ENCODE measurements at regions of chr5 and their contacts with region 1.

Region 1: GRCh38 chr5:172910828-172911627 is 48.2 kb upstream of the RPL26L1 start:
- DNase-seq: peak; percentile 73
- ATAC-seq: peak; percentile 83
- H3K4me3 ChIP-seq: no peak overlapping the region
- H3K4me3 Mint-ChIP-seq: peak overlapping the region; percentile 38
- H3K27ac ChIP-seq: peak overlapping the region; percentile 59 to 91
- H3K27ac Mint-ChIP-seq: peak overlapping the region; percentile 89
- H3K4me1 ChIP-seq: peaks cover 16 to 18% of the 10 kb centered on the region in 2 donors
- H3K4me1 Mint-ChIP-seq: peaks cover 20% of the 10 kb centered on the region
- H3K27me3 ChIP-seq: no peaks in the 10 kb centered on the region
- H3K27me3 Mint-ChIP-seq: no peaks in the 10 kb centered on the region
- CTCF ChIP-seq: no peak

Region 2: DNA sequence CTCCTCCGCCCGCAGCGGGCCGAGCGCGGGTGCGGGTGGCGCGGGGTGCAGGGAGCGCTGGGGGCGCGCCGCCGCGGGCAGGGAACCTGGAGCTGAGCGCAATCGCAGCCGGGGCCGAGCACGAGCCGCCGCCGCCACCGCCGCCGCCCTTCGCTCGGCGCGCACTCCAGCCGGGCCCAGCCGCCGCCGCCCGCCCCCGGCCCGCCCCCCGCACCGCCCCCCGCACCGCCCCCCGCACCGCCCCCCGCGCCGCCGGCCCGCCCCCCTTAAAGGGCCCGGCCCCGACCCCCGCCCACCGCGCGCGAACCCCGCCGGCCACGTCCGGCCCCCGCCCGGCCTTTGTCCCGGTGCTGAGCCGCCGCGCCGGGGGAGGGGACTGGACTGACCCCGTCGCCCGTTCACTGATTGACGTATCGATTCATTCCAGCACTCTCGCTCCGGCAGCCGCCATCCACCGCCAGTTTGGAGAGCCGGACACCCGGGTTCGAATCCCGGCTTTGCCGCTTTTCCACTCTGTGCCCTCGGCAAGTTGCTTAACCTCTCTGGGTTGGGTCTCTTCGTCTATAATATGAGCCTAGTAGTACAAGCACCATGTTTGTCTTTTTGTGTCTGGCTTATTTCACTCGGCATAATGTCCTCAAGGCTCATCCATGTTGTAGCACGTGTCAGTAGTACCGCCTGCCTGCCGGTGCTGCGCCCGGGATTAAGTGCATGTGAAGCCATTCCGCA is 456.5 kb before region 1 on chr5 and contains the start of gene SH3PXD2B:
- CTCF ChIA-PET with region 1: no interaction called
- POLR2A ChIA-PET with region 1: no interaction called
- intact Hi-C with region 1: loop called (anchors 10 kb)
- DNase-seq: peak; percentile 47
- ATAC-seq: peak; percentile 76
- H3K4me3 ChIP-seq: peak within 1 kb of the TSS in 4 of 5 experiments; percentile 17 to 52 (median 47)
- H3K4me3 Mint-ChIP-seq: peak within 1 kb of the TSS; percentile 84
- H3K27ac ChIP-seq: no peak within 1 kb of the TSS
- H3K27ac Mint-ChIP-seq: no peak within 1 kb of the TSS
- H3K4me1 ChIP-seq: peaks cover 7 to 8% of the 10 kb centered on the region in 2 donors
- H3K4me1 Mint-ChIP-seq: peaks cover 12% of the 10 kb centered on the region
- H3K27me3 ChIP-seq: peaks cover 0 to 52% (median 19%) of the 10 kb centered on the region in 4 experiments
- H3K27me3 Mint-ChIP-seq: peaks cover 59% of the 10 kb centered on the region
- CTCF ChIP-seq: no peak
- total RNA-seq, gene SH3PXD2B: not detected in 2 replicates

Region 3: GRCh38 chr5:172764849-172765765 is 145.9 kb before region 1 on chr5:
- CTCF ChIA-PET with region 1: interaction called, 12 read pairs
- POLR2A ChIA-PET with region 1: interaction called, 4 read pairs
- intact Hi-C with region 1: loop called (anchors 2 kb)
- DNase-seq: peak; percentile 99
- ATAC-seq: peak; percentile 78
- H3K4me3 ChIP-seq: peak overlapping the region; percentile 27 to 74 (median 52)
- H3K4me3 Mint-ChIP-seq: peak overlapping the region; percentile 83
- H3K27ac ChIP-seq: peak overlapping the region; percentile 92 to 94
- H3K27ac Mint-ChIP-seq: peak overlapping the region; percentile 94
- H3K4me1 ChIP-seq: peaks cover 33 to 42% of the 10 kb centered on the region in 2 donors
- H3K4me1 Mint-ChIP-seq: peaks cover 59% of the 10 kb centered on the region
- H3K27me3 ChIP-seq: no peaks in the 10 kb centered on the region
- H3K27me3 Mint-ChIP-seq: no peaks in the 10 kb centered on the region
- CTCF ChIP-seq: no peak

Region 4: GRCh38 chr5:172870291-172870714 is 40.7 kb before region 1 on chr5:
- CTCF ChIA-PET with region 1: no interaction called
- POLR2A ChIA-PET with region 1: no interaction called
- intact Hi-C with region 1: loop called (anchors 5 kb)
- DNase-seq: no peak
- ATAC-seq: no peak
- H3K4me3 ChIP-seq: no peak overlapping the region
- H3K4me3 Mint-ChIP-seq: no peak overlapping the region
- H3K27ac ChIP-seq: peak overlapping the region in 1 of 2 donors; percentile 60
- H3K27ac Mint-ChIP-seq: no peak overlapping the region
- H3K4me1 ChIP-seq: peaks cover 61 to 75% of the 10 kb centered on the region in 2 donors
- H3K4me1 Mint-ChIP-seq: peaks cover 35% of the 10 kb centered on the region
- H3K27me3 ChIP-seq: no peaks in the 10 kb centered on the region
- H3K27me3 Mint-ChIP-seq: no peaks in the 10 kb centered on the region
- CTCF ChIP-seq: no peak

Measured in B cell (primary cell).